Common myeloid progenitor, CD34-positive (primary cell): ENCODE measurements at regions of chr20 and their contacts with region 1.

Region 1: DNA sequence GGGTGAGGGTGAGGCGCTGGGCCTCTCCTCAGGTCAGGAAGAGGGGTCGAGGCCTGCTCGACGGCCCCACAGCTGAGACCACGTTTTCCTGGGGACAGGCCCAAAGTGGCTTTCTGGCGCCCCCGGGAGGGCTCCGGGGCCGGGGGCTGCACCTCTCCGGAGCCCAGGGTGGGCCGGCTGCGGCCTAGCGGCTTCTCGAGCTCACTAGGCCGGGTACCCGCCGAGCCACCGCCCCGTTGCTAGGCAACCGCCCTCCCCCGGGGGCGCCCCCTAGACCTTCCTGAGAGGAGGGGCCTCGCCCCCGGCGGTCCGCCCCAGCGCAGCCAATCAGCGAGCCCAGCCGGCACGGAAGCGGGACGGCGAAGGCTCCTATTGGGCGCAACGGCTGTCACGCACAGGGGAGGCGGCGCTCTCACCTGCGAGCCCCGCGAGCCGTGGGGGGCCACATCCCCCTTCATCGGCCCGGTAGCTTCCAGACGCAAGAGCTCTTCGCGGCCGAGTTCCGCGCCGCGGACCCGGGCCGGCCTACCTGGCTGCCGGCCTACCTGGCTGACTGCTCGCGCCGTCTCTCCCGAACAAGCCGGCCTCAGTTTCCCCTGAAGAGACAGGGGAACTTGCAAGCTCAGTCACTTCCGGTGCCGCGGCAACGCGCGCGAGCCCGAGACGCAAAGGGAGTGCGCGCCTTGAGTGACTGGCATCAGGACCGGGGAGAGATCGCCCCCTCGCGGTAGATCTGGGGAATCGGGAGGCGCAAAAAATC is 831 bp upstream of the BCL2L1 start:
- DNase-seq: peak; percentile 98 to 99 (median 99)
- H3K4me3 ChIP-seq: peak overlapping the region; percentile 81 to 95 (median 88)
- H3K27ac ChIP-seq: peak overlapping the region; percentile 92 to 98
- H3K4me1 ChIP-seq: peaks cover 25 to 45% (median 41%) of the 10 kb centered on the region in 4 experiments
- H3K27me3 ChIP-seq: no peaks in the 10 kb centered on the region

Region 2: GRCh38 chr20:31566658-31567379 is 156.7 kb before region 1 on chr20:
- CTCF ChIA-PET with region 1: interaction called, 30 read pairs
- POLR2A ChIA-PET with region 1: interaction called, 3 read pairs
- DNase-seq: peak in 1 of 3 donors; percentile 51
- H3K4me3 ChIP-seq: no peak overlapping the region
- H3K27ac ChIP-seq: peak overlapping the region in 1 of 2 experiments; percentile 23
- H3K4me1 ChIP-seq: peaks cover 0 to 43% (median 30%) of the 10 kb centered on the region in 4 experiments
- H3K27me3 ChIP-seq: no peaks in the 10 kb centered on the region

Region 3: DNA sequence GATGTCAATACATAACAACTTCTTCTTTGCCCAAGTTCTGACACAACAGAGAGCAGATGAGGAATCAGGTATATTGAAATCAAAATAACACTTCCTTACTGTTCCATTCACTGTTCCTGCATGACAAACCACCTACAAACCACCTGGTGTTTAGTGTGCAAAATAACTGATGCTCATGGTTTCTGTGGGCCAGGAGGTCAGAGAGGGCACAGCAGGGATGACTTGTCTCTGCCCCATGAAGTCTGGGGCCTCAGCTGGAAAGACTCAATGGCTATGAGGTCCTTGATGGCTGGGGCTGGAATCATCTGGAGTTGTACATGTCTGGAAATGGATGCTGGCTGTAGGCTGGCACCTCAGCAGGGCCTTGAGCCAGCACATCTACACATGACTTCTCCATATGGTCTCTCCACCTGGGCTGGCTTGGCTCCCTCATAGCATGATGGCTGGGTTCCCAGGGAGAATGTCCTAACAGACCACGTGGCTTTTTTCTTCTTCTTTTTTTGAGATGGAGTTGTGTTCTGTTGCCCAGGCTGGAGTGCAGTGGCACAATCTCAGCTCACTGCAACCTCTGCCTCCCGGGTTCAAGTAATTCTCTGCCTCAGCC is 93.2 kb before region 1 on chr20:
- CTCF ChIA-PET with region 1: interaction called, 43 read pairs
- POLR2A ChIA-PET with region 1: interaction called, 3 read pairs
- DNase-seq: no peak
- H3K4me3 ChIP-seq: no peak overlapping the region
- H3K27ac ChIP-seq: no peak overlapping the region
- H3K4me1 ChIP-seq: no peaks in the 10 kb centered on the region
- H3K27me3 ChIP-seq: no peaks in the 10 kb centered on the region

Region 4: DNA sequence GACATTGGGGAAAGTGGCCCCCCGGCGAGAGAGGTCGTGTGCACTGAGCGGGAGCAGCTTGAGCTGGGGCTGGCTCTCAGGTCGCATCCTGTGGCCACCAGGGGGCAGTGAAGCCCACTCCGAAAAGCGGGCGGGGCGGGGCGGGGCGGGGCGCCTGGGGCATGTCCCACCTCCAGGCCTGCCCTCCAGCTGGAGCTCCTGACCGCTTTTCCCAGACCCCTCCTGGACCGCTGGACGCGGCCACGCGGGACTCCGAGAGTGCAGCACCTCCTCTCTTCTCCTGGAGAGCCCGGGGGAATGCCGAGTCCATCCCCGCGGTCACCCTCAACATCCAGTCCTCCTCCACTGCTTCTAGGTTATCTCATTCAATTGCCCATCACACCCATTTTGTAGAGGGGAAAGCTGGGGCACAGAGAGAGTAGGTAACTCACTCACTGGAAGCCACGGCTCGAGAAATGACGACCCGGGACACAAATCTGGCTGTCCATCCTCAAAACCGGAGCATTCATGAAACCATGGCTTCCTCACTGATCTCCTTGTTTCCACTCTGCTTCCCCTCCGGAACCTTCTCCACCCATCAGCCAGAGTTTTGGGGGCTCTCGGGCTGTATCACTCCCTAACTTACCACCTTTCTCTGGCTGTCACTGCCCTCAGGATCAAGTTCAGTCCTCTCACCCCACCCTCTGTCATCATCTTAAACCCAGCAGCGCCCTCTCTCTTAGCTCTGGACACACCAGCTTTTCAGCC is 61.7 kb before region 1 on chr20:
- CTCF ChIA-PET with region 1: interaction called, 280 read pairs
- POLR2A ChIA-PET with region 1: interaction called, 17 read pairs
- DNase-seq: peak; percentile 62 to 71 (median 70)
- H3K4me3 ChIP-seq: peak overlapping the region in 6 of 7 experiments; percentile 35 to 78 (median 56)
- H3K27ac ChIP-seq: peak overlapping the region in 1 of 2 experiments; percentile 37
- H3K4me1 ChIP-seq: peaks cover 0 to 37% (median 21%) of the 10 kb centered on the region in 4 experiments
- H3K27me3 ChIP-seq: no peaks in the 10 kb centered on the region

Region 5: DNA sequence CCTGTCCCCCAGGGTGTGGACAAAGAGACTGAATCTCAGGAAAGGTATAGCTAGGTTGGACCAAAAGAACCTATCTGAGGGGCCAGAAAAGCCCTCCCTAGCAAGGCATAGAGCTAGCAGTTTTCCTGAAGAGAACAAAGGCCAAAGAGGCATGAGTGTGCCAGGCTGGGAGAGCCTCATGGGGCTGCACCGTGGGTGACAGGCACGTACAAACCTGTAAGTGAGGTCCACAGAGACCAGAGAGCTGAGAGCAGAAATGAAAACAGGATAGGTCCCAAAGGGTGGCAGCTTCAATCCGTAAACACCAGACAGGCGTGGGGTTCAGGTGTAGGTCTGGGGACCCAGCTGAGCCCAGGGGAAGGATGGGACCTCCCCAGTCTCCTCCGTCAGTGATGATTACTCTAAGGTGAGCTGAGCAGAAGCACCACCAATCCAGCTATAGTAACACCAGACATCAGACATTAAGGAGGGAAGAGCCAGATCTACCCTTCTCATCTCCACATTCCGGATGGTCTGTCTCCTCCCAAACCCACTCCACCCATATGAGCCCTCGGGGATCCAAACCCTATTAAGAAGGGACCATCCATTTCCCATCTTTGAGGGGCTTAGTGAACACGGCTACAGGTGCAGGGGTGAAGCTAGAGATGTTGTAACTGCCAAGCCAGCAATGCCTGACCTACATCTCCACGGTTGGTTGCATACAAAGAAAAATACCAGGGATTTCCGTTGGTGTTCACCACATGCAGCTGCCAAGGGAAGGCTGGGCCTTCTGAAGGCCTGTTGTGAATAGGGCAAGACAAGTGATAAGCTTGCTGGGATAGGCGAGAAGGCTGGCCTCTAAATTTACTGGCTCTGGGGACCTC is 39.1 kb before region 1 on chr20:
- CTCF ChIA-PET with region 1: interaction called, 41 read pairs
- POLR2A ChIA-PET with region 1: no interaction called
- DNase-seq: peak in 2 of 3 donors; percentile 41 to 51
- H3K4me3 ChIP-seq: no peak overlapping the region
- H3K27ac ChIP-seq: peak overlapping the region in 1 of 2 experiments; percentile 9
- H3K4me1 ChIP-seq: peaks cover 0 to 26% (median 20%) of the 10 kb centered on the region in 4 experiments
- H3K27me3 ChIP-seq: no peaks in the 10 kb centered on the region

Region 6: GRCh38 chr20:31712564-31713311 is 10.8 kb before region 1 on chr20:
- CTCF ChIA-PET with region 1: interaction called, 15 read pairs
- POLR2A ChIA-PET with region 1: interaction called, 3 read pairs
- DNase-seq: no peak
- H3K4me3 ChIP-seq: no peak overlapping the region
- H3K27ac ChIP-seq: peak overlapping the region in 1 of 2 experiments; percentile 44
- H3K4me1 ChIP-seq: peaks cover 8 to 36% (median 22%) of the 10 kb centered on the region in 4 experiments
- H3K27me3 ChIP-seq: no peaks in the 10 kb centered on the region

Region 7: DNA sequence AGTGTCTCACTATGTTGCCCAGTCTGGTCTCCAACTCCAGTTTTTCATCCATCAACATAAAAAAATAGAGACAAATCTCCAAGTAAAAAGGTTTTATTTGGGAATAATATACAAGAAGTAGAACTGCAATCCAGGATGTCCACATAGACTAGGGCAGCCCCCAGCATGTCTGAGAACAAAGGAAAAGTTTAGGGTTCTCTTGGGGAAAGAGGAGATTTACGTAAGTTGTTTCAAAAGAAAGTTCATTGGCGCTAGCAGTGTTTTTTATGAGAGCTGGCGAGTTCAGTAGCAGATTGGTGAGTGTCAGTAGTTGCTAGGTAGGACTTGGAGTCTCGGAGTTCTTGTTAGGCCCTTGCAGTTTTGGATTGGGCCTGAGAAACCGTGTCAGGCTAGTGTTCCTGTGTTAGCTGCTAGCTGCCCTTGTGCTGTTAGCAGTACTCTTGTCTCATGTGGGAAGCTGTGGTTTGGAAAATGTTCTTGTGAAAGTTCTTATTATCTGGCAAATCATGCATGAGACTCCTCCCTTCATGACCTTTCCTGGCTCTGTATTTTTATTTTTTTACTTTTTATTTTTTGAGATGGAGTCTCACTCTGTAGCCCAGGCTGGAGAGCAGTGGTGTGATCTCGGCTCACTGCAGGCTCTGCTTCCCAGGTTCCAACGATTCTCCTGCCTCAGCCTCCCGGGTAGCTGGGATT is 171.6 kb after region 1 on chr20:
- CTCF ChIA-PET with region 1: no interaction called
- POLR2A ChIA-PET with region 1: no interaction called
- DNase-seq: peak; percentile 89 to 94 (median 92)
- H3K4me3 ChIP-seq: peak overlapping the region in 2 of 7 experiments; percentile 11 to 52
- H3K27ac ChIP-seq: peak overlapping the region; percentile 40 to 69
- H3K4me1 ChIP-seq: peaks cover 0 to 10% (median 6%) of the 10 kb centered on the region in 4 experiments
- H3K27me3 ChIP-seq: no peaks in the 10 kb centered on the region